T-cell (primary cell): ENCODE measurements at regions of chr22 and their contacts with region 1.

Region 1: DNA sequence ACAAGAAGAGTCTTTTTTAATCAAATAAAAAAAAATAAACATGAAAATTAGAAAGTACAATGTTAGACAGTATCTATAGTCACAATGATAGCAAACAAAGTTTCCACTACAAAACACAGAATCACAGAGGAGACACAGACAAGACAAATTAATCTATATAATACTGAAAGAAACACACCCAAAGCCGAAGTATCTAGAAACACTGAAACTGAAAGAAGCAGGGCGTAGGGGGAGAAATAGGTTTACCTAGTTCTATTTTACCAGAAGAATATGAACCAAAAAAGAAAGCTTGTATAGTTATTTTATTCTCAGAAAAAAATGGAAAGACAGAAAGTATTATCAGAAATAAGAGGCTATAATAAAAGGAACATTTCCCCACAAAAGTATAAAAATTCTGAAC is 27.1 kb upstream of the NUP50 start:
- DNase-seq: no peak
- ATAC-seq: no peak
- H3K4me3 ChIP-seq: no peak overlapping the region
- H3K4me3 Mint-ChIP-seq: no peak overlapping the region
- H3K27ac ChIP-seq: no peak overlapping the region
- H3K27ac Mint-ChIP-seq: no peak overlapping the region
- H3K4me1 ChIP-seq: no peaks in the 10 kb centered on the region
- H3K4me1 Mint-ChIP-seq: peaks cover 0 to 7% (median 2%) of the 10 kb centered on the region in 3 donors
- H3K27me3 ChIP-seq: peaks cover 0 to 3% of the 10 kb centered on the region in 2 experiments
- H3K27me3 Mint-ChIP-seq: no peaks in the 10 kb centered on the region

Region 2: GRCh38 chr22:45163451-45164269 is 27.1 kb after region 1 on chr22 and contains the start of gene NUP50:
- CTCF ChIA-PET with region 1: no interaction called
- POLR2A ChIA-PET with region 1: interaction called in 1 of 2 experiments, 11 read pairs
- DNase-seq: peak; percentile 90 to 99 (median 95)
- ATAC-seq: peak; percentile 81 to 85 (median 84)
- H3K4me3 ChIP-seq: peak within 1 kb of the TSS; percentile 79 to 86
- H3K4me3 Mint-ChIP-seq: peak within 1 kb of the TSS; percentile 93 to 97 (median 94)
- H3K27ac ChIP-seq: peak within 1 kb of the TSS; percentile 70
- H3K27ac Mint-ChIP-seq: peak within 1 kb of the TSS; percentile 92
- H3K4me1 ChIP-seq: peaks cover 25 to 46% of the 10 kb centered on the region in 2 experiments
- H3K4me1 Mint-ChIP-seq: peaks cover 56 to 69% (median 56%) of the 10 kb centered on the region in 3 donors
- H3K27me3 ChIP-seq: no peaks in the 10 kb centered on the region
- H3K27me3 Mint-ChIP-seq: no peaks in the 10 kb centered on the region
- total RNA-seq, gene NUP50: 97.0 to 151 (median 126) TPM